HCT116 (cell line): ENCODE measurements at regions of chr3 and their contacts with region 1.

Region 1: DNA sequence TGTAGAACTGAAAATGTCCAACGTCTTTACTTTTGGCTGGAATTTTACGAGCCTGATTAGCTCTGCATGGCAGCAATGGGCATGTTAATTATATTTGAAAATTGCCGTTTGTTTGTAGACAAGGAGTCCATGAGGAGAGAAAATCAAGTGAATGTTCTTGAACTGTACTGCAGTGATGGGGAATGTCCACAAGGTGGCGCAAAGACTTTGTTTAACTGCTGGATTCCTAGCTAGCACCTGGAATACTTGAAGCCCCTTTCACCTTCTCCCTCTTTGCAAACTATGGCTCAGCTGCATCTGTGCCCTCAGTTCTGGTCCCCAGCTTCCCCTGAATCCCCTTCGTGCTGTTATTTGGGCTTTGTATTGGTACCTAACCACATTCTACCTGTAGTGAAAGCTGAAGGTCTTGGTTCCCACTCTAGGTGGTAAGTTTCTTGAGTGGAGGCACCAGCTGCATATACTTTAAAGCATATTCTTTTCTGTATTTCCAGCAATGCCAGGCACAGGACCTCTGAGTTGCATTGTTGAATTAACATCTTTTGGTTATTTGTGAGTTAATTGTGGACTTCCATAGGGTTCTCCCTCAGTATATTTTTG is 25.3 kb downstream of the EXOG start:
- DNase-seq: peak; percentile 62
- ATAC-seq: peak; percentile 78
- H3K4me3 ChIP-seq: no peak overlapping the region
- H3K27ac ChIP-seq: no peak overlapping the region
- H3K4me1 ChIP-seq: no peaks in the 10 kb centered on the region
- H3K27me3 ChIP-seq: no peaks in the 10 kb centered on the region
- CTCF ChIP-seq: peak; percentile 81 to 91 (median 85)
- POLR2A ChIP-seq: no peak
- RAD21 ChIP-seq: peak; percentile 81

Region 2: GRCh38 chr3:38490281-38491030 is 31.0 kb before region 1 on chr3:
- CTCF ChIA-PET with region 1: no interaction called
- POLR2A ChIA-PET with region 1: no interaction called
- RAD21 ChIA-PET with region 1: no interaction called
- intact Hi-C with region 1: no loop called
- DNase-seq: no peak
- ATAC-seq: no peak
- H3K4me3 ChIP-seq: no peak overlapping the region
- H3K27ac ChIP-seq: no peak overlapping the region
- H3K4me1 ChIP-seq: no peaks in the 10 kb centered on the region
- H3K27me3 ChIP-seq: no peaks in the 10 kb centered on the region
- CTCF ChIP-seq: no peak
- POLR2A ChIP-seq: no peak
- RAD21 ChIP-seq: no peak

Region 3: GRCh38 chr3:38510631-38511030 is 10.9 kb before region 1 on chr3:
- CTCF ChIA-PET with region 1: interaction called, 10 read pairs
- POLR2A ChIA-PET with region 1: no interaction called
- RAD21 ChIA-PET with region 1: no interaction called
- intact Hi-C with region 1: no loop called
- DNase-seq: no peak
- ATAC-seq: no peak
- H3K4me3 ChIP-seq: no peak overlapping the region
- H3K27ac ChIP-seq: no peak overlapping the region
- H3K4me1 ChIP-seq: no peaks in the 10 kb centered on the region
- H3K27me3 ChIP-seq: no peaks in the 10 kb centered on the region
- CTCF ChIP-seq: no peak
- POLR2A ChIP-seq: no peak
- RAD21 ChIP-seq: no peak

Region 4: DNA sequence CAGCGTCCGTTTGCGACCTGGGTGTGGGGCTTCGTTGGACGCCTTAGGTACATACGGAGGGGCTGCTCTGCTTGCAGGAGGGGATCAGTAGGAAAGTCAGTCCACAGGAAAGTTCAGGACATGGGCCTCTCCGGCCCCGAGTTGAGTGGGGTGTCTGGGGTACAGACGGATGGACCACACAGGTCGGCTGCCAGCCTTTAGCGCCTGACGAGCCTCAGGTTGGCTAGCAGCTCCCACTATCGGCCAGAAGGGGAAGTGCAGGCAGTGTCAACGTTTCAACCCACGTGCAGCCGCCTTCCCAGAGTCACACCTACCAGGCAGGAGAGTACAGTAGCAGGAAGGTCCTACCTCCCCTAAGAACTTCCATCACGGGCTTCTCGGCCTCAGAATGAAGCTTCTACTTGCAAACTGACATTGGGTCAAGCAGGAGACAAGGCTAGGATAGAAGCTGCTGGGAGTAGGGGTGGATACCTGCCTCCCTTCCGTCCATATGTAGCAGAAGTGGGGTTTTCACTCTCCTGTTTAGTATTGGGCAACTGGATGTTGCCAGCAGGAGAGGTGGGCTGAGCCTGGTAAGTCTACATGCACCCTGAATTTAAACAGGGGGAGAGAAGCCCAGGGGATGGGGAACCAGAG is 129.8 kb after region 1 on chr3:
- CTCF ChIA-PET with region 1: interaction called, 53 read pairs
- POLR2A ChIA-PET with region 1: no interaction called
- RAD21 ChIA-PET with region 1: interaction called, 6 read pairs
- intact Hi-C with region 1: loop called (anchors 1 kb)
- DNase-seq: peak; percentile 60
- ATAC-seq: peak; percentile 62
- H3K4me3 ChIP-seq: no peak overlapping the region
- H3K27ac ChIP-seq: no peak overlapping the region
- H3K4me1 ChIP-seq: peaks cover 11 to 31% of the 10 kb centered on the region in 2 experiments
- H3K27me3 ChIP-seq: no peaks in the 10 kb centered on the region
- CTCF ChIP-seq: peak; percentile 80 to 98 (median 85)
- POLR2A ChIP-seq: no peak
- RAD21 ChIP-seq: peak; percentile 80